Pancreas (tissue), 10 donors: ENCODE measurements at regions of chrX and their contacts with region 1.

Region 1: GRCh38 chrX:13653022-13653693 is at the start of gene TCEANC:
- DNase-seq: peak; percentile 93 to 99 (median 98)
- ATAC-seq: peak; percentile 97 to 100 (median 100)
- H3K4me3 ChIP-seq: peak within 1 kb of the TSS; percentile 26 to 63 (median 49)
- H3K27ac ChIP-seq: peak within 1 kb of the TSS; percentile 68 to 92 (median 76)
- H3K4me1 ChIP-seq: peaks cover 5 to 15% (median 6%) of the 10 kb centered on the region in 3 donors
- H3K27me3 ChIP-seq: no peaks in the 10 kb centered on the region
- CTCF ChIP-seq: no peak
- total RNA-seq, gene TCEANC: 2.0 to 4.6 (median 2.6) TPM

Region 2: GRCh38 chrX:12701628-12702027 is 951.5 kb before region 1 on chrX:
- intact Hi-C with region 1: no loop called
- DNase-seq: peak; percentile 55 to 78 (median 68)
- ATAC-seq: peak; percentile 91 to 97 (median 96)
- H3K4me3 ChIP-seq: no peak overlapping the region
- H3K27ac ChIP-seq: no peak overlapping the region
- H3K4me1 ChIP-seq: no peaks in the 10 kb centered on the region
- H3K27me3 ChIP-seq: peaks cover 0 to 3% (median 0%) of the 10 kb centered on the region in 4 donors
- CTCF ChIP-seq: peak; percentile 26 to 44 (median 42)

Region 3: GRCh38 chrX:13747836-13748235 is 94.7 kb after region 1 on chrX:
- intact Hi-C with region 1: loop called in 1 of 3 experiments (anchors 10 kb)
- DNase-seq: peak in 2 of 6 donors; percentile 13 to 27
- ATAC-seq: peak; percentile 47 to 74 (median 68)
- H3K4me3 ChIP-seq: no peak overlapping the region
- H3K27ac ChIP-seq: no peak overlapping the region
- H3K4me1 ChIP-seq: peaks cover 0 to 6% (median 2%) of the 10 kb centered on the region in 3 donors
- H3K27me3 ChIP-seq: no peaks in the 10 kb centered on the region
- CTCF ChIP-seq: peak in 3 of 4 donors; percentile 17 to 33 (median 20)